PC-3 (cell line): ENCODE measurements at regions of chr20 and their contacts with region 1.

Region 1: GRCh38 chr20:18566892-18567742 is at the start of gene SMIM26:
- DNase-seq: peak; percentile 98
- ATAC-seq: peak; percentile 99
- H3K4me3 ChIP-seq: peak within 1 kb of the TSS; percentile 94
- H3K27ac ChIP-seq: peak within 1 kb of the TSS; percentile 36
- H3K4me1 ChIP-seq: peaks cover 7% of the 10 kb centered on the region
- H3K27me3 ChIP-seq: no peaks in the 10 kb centered on the region
- CTCF ChIP-seq: no peak
- total RNA-seq, gene SMIM26: 76.7 and 83.6 TPM in 2 replicates

Region 2: GRCh38 chr20:18587665-18588573 is 20.8 kb after region 1 on chr20 and contains the start of gene DTD1:
- CTCF ChIA-PET with region 1: no interaction called
- POLR2A ChIA-PET with region 1: interaction called, 12 read pairs
- intact Hi-C with region 1: no loop called
- DNase-seq: peak; percentile 96
- ATAC-seq: peak; percentile 90
- H3K4me3 ChIP-seq: peak within 1 kb of the TSS; percentile 75
- H3K27ac ChIP-seq: peak within 1 kb of the TSS; percentile 61
- H3K4me1 ChIP-seq: peaks cover 14% of the 10 kb centered on the region; the same call in 1 of the 2 replicates
- H3K27me3 ChIP-seq: no peaks in the 10 kb centered on the region
- CTCF ChIP-seq: peak; percentile 73
- total RNA-seq, gene DTD1: 101 and 124 TPM in 2 replicates

Region 3: GRCh38 chr20:18625907-18626655 is 59.0 kb after region 1 on chr20:
- CTCF ChIA-PET with region 1: no interaction called
- POLR2A ChIA-PET with region 1: no interaction called
- intact Hi-C with region 1: no loop called
- DNase-seq: no peak
- ATAC-seq: no peak
- H3K4me3 ChIP-seq: no peak overlapping the region
- H3K27ac ChIP-seq: no peak overlapping the region
- H3K4me1 ChIP-seq: peaks cover 2% of the 10 kb centered on the region
- H3K27me3 ChIP-seq: no peaks in the 10 kb centered on the region
- CTCF ChIP-seq: no peak

Region 4: GRCh38 chr20:18650224-18650623 is 83.1 kb after region 1 on chr20:
- CTCF ChIA-PET with region 1: interaction called, 12 read pairs
- POLR2A ChIA-PET with region 1: no interaction called
- intact Hi-C with region 1: no loop called
- DNase-seq: no peak
- ATAC-seq: no peak
- H3K4me3 ChIP-seq: no peak overlapping the region
- H3K27ac ChIP-seq: no peak overlapping the region
- H3K4me1 ChIP-seq: 0 out of 2 replicates have a peak, but pooled peaks cover 7% of the 10 kb centered on the region
- H3K27me3 ChIP-seq: no peaks in the 10 kb centered on the region
- CTCF ChIP-seq: no peak